ENCODE measurements at regions of chr1 and their contacts with region 1.

Region 1: DNA sequence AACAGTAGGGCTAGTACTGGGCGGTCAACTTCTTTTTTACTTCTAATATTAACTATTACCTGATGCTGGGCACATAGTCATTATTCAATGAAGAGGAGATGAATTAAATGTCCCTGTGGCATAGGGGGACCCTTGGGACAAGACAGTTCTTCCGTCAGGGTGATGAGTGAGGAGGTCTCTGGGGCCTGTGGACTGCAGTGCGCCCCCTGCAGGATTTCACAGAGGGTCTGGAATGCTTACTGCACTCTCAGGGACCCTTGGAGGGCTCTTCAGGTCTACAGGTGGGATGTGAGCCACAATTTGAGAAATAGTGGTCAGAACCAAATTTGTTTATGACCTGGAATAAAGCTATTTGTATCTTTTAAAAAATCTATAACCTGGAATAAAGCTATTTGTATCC is 149.4 kb downstream of the FAM78B start:
- DNase-seq: no peak
- ATAC-seq: peak; percentile 65; the same call in 1 of the 2 replicates
- H3K4me3 ChIP-seq: no peak overlapping the region
- H3K27ac ChIP-seq: no peak overlapping the region
- H3K4me1 ChIP-seq: no peaks in the 10 kb centered on the region
- H3K27me3 ChIP-seq: peaks cover 56% of the 10 kb centered on the region
- CTCF ChIP-seq: peak in 2 of 3 experiments; percentile 48 to 59; a peak in 4 of 6 replicates
- POLR2A ChIP-seq: no peak
- RAD21 ChIP-seq: no peak

Region 2: DNA sequence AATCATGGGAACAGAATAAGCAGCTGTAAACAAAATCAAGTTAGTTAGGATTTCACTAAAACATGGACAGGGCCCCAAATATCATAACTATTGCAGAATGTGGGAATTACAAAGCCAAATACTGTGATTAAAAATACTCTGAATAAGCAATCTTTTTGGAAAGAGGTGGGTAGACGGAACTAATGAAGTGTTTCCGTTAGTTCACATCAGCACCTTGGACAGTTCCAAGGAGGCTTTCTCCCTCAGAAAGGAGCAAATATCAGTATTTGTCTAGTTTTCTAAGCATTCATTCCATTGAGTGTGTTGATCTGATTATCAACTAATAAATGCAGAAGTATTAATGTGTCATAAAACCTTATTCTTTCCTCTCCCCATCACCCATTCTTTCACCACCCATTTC is 52.0 kb after region 1 on chr1:
- CTCF ChIA-PET with region 1: no interaction called
- POLR2A ChIA-PET with region 1: no interaction called
- RAD21 ChIA-PET with region 1: no interaction called
- intact Hi-C with region 1: loop called (anchors 5 kb)
- DNase-seq: no peak
- ATAC-seq: no peak
- H3K4me3 ChIP-seq: no peak overlapping the region
- H3K27ac ChIP-seq: no peak overlapping the region
- H3K4me1 ChIP-seq: no peaks in the 10 kb centered on the region
- H3K27me3 ChIP-seq: peaks cover 4% of the 10 kb centered on the region; the same call in 1 of the 2 replicates
- CTCF ChIP-seq: no peak
- POLR2A ChIP-seq: no peak
- RAD21 ChIP-seq: no peak

Region 3: GRCh38 chr1:166270476-166271150 is 253.2 kb after region 1 on chr1:
- CTCF ChIA-PET with region 1: no interaction called
- POLR2A ChIA-PET with region 1: no interaction called
- RAD21 ChIA-PET with region 1: no interaction called
- intact Hi-C with region 1: no loop called
- DNase-seq: no peak
- ATAC-seq: no peak
- H3K4me3 ChIP-seq: no peak overlapping the region
- H3K27ac ChIP-seq: no peak overlapping the region
- H3K4me1 ChIP-seq: no peaks in the 10 kb centered on the region; a peak in 1 of 4 replicates
- H3K27me3 ChIP-seq: no peaks in the 10 kb centered on the region
- CTCF ChIP-seq: no peak
- POLR2A ChIP-seq: no peak
- RAD21 ChIP-seq: no peak

Measured in HCT116 (cell line).